ENCODE measurements at regions of chr7 and their contacts with region 1.

Region 1: GRCh38 chr7:87129848-87130247 is 22.4 kb upstream of the DMTF1 start:
- DNase-seq: no peak
- H3K4me3 Mint-ChIP-seq: no peak overlapping the region
- H3K27ac Mint-ChIP-seq: no peak overlapping the region
- H3K4me1 Mint-ChIP-seq: no peaks in the 10 kb centered on the region
- H3K27me3 Mint-ChIP-seq: peaks cover 4% of the 10 kb centered on the region

Region 2: GRCh38 chr7:87075671-87076404 is 54.0 kb before region 1 on chr7:
- intact Hi-C with region 1: loop called (anchors 10 kb)
- DNase-seq: no peak
- H3K4me3 Mint-ChIP-seq: no peak overlapping the region
- H3K27ac Mint-ChIP-seq: no peak overlapping the region
- H3K4me1 Mint-ChIP-seq: peaks cover 2% of the 10 kb centered on the region
- H3K27me3 Mint-ChIP-seq: peaks cover 15% of the 10 kb centered on the region